Dorsolateral prefrontal cortex (tissue), 120 donors: ENCODE measurements at regions of chr10 and their contacts with region 1.

Region 1: DNA sequence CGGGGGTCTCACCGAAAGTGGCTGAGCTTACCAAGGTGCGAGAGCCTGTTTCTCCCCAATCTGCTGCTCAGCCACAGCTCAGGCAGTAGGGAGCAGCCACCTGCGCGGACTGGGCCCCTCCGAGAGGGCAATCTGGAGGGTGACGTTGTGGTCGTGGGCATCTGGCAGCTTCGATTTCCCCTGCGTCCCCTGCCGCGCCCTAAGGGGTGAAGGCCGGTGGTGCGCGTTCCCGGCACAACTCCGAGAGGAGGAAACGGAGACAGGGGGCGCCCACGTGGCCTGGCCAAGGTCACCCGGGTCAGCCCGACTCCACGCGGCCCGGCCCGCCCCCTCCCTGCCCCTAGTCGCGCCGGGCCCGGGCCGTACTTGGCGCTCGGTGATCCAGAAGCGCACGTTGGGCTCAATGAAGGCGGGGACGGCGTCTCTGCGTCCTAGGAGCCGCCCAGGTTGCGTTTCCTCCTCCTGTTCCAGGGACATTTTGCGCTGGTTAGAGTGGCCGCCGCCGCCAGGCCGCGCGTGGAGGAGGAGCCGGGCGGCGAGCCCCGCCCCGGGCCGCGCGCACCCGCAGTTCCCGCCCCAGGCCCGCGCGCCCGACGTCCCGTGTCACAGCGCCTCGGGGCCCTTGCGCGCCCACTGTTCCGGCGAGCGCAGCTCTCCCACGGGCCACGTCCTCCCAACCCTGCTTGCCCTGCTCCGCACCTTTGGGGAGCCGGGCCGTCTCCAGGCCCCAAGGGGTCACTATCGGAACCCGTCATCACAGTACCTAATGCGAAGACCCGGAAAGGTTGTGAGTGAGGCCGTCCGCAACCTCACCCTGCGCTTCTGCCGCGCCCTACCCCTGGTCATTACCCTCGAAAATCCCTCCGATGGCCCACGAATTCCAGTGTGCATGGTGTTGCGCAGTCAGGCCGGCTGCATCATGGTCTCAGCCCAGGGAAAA is at the start of gene SFXN4:
- DNase-seq: peak; percentile 75 to 91 (median 81)
- H3K4me3 ChIP-seq: peak within 1 kb of the TSS; percentile 61 to 98 (median 87)
- H3K27ac ChIP-seq: peak within 1 kb of the TSS; percentile 21 to 98 (median 90)
- H3K27me3 ChIP-seq: no peaks in the 10 kb centered on the region
- CTCF ChIP-seq: peak in 36 of 56 donors; percentile 7 to 62 (median 31)
- total RNA-seq, gene SFXN4: 22.4 to 49.6 (median 31.7) TPM

Region 2: GRCh38 chr10:119103903-119104652 is 61.4 kb before region 1 on chr10 and contains the start of gene DENND10:
- intact Hi-C with region 1: loop called in 1 of 2 experiments (anchors 10 kb)
- DNase-seq: peak; percentile 73 to 88 (median 83)
- H3K4me3 ChIP-seq: peak within 1 kb of the TSS; percentile 56 to 92 (median 79)
- H3K27ac ChIP-seq: peak within 1 kb of the TSS in 57 of 59 donors; percentile 5 to 93 (median 79)
- H3K27me3 ChIP-seq: no peaks in the 10 kb centered on the region
- CTCF ChIP-seq: peak in 17 of 56 donors; percentile 6 to 46 (median 17)
- total RNA-seq, gene DENND10: 30.1 to 60.7 (median 44.6) TPM

Region 3: GRCh38 chr10:119178372-119179119 is 13.1 kb after region 1 on chr10 and contains the start of gene PRDX3:
- intact Hi-C with region 1: loop called (anchors 1 kb)
- DNase-seq: peak; percentile 84 to 94 (median 92)
- H3K4me3 ChIP-seq: peak within 1 kb of the TSS; percentile 62 to 93 (median 80)
- H3K27ac ChIP-seq: peak within 1 kb of the TSS in 58 of 59 donors; percentile 86 to 99 (median 97)
- H3K27me3 ChIP-seq: no peaks in the 10 kb centered on the region
- CTCF ChIP-seq: peak in 52 of 56 donors; percentile 12 to 74 (median 52)
- total RNA-seq, gene PRDX3: 62.3 to 112 (median 87.0) TPM

Region 4: GRCh38 chr10:119253433-119254174 is 88.2 kb after region 1 on chr10:
- intact Hi-C with region 1: no loop called
- DNase-seq: no peak
- H3K4me3 ChIP-seq: no peak overlapping the region
- H3K27ac ChIP-seq: peak overlapping the region in 33 of 59 donors; percentile 6 to 81 (median 50)
- H3K27me3 ChIP-seq: no peaks in the 10 kb centered on the region
- CTCF ChIP-seq: no peak